CD4-positive, alpha-beta T cell (primary cell): ENCODE measurements at regions of chr6 and their contacts with region 1.

Region 1: GRCh38 chr6:5203546-5203945 is 57.2 kb downstream of the LYRM4 start:
- DNase-seq: no peak
- ATAC-seq: no peak
- H3K4me3 ChIP-seq: no peak overlapping the region
- H3K4me3 Mint-ChIP-seq: no peak overlapping the region
- H3K27ac ChIP-seq: no peak overlapping the region
- H3K27ac Mint-ChIP-seq: no peak overlapping the region
- H3K4me1 ChIP-seq: no peaks in the 10 kb centered on the region
- H3K4me1 Mint-ChIP-seq: no peaks in the 10 kb centered on the region
- H3K27me3 ChIP-seq: no peaks in the 10 kb centered on the region
- H3K27me3 Mint-ChIP-seq: no peaks in the 10 kb centered on the region
- CTCF ChIP-seq: no peak

Region 2: DNA sequence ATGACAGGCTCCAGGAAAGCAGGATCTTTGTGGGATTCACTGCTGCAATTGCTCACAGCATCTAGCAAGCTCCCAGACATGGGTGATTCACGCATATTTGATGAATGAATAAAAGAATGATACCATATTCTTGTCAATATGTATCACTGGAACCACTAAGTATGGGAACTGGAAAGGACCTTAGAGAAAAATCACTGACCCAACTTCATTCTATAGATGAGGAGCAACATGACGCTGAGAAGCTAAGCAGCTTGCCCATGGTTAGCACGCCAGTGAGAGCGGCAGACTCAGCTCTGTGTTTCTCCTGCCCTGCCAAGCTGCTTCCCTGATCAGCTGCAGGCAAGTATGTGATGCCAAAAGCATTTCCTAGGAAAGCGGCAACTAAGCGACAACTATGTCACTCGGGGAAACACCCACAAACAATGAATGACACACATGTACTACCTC is 51.6 kb before region 1 on chr6:
- CTCF ChIA-PET with region 1: no interaction called
- POLR2A ChIA-PET with region 1: no interaction called
- intact Hi-C with region 1: loop called in 1 of 2 experiments (anchors 5 kb)
- DNase-seq: no peak
- ATAC-seq: no peak
- H3K4me3 ChIP-seq: no peak overlapping the region
- H3K4me3 Mint-ChIP-seq: no peak overlapping the region
- H3K27ac ChIP-seq: no peak overlapping the region
- H3K27ac Mint-ChIP-seq: no peak overlapping the region
- H3K4me1 ChIP-seq: no peaks in the 10 kb centered on the region
- H3K4me1 Mint-ChIP-seq: no peaks in the 10 kb centered on the region
- H3K27me3 ChIP-seq: no peaks in the 10 kb centered on the region
- H3K27me3 Mint-ChIP-seq: no peaks in the 10 kb centered on the region
- CTCF ChIP-seq: no peak